ENCODE measurements at regions of chr20 and their contacts with region 1.

Region 1: DNA sequence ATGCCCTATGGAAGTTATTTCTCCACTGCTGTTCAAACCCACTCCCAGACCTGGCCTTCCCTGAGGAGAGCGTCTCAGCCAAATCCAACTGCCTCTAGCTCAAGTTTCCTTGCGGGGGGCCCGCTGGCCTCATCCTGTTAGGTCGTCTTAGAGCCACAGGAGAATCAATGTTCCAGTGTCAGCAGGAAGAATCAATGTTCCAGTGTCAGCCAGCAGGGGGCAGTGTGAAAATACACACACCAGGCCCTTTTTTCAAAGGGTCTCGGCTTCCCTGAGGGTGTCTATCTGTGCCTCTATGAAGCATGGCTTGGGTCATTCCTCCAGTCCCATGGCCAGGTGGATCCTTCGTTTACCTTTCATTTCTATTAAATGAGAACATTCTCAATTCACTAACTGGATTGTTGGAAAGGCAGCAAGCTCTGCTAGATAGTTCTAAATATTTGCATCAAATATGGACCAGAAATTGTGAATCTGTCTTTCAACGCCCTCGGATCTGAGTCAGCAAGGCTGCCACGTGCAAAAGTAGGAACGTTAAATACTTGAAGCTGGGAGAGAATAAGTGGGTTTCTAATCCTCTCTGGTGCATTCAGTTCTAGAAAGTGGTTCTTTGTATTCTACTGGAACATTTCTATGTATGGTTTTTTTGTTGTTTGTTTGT is 19.2 kb downstream of the PRND start:
- DNase-seq: peak; percentile 87
- ATAC-seq: peak; percentile 87
- H3K4me3 Mint-ChIP-seq: no peak overlapping the region
- H3K27ac Mint-ChIP-seq: no peak overlapping the region
- H3K4me1 Mint-ChIP-seq: peaks cover 3% of the 10 kb centered on the region; the same call in 1 of the 2 replicates
- H3K27me3 Mint-ChIP-seq: peaks cover 2% of the 10 kb centered on the region; the same call in 1 of the 2 replicates
- CTCF ChIP-seq: peak; percentile 85

Region 2: DNA sequence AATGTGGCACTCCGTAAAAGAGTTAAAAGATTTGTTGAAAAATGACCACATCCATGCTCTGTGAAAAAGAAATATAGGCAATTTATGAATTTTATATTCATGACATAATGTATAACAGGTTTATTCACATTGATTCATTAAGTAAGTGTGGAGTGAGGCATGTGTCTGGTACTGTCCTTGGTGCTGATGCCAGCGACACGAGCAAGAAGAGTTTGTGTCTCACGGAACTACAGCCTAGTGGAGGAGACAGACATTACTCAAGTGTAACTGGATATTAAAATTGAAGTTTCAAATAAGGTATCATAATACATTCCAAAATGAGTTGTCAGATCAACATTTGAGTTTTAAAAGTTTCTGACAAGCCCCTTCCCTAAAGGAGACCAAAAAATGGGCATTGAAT is 177.4 kb before region 1 on chr20:
- CTCF ChIA-PET with region 1: no interaction called
- POLR2A ChIA-PET with region 1: no interaction called
- DNase-seq: peak; percentile 47
- ATAC-seq: peak; percentile 60; the same call in 1 of the 2 replicates
- H3K4me3 Mint-ChIP-seq: no peak overlapping the region
- H3K27ac Mint-ChIP-seq: no peak overlapping the region
- H3K4me1 Mint-ChIP-seq: peaks cover 6% of the 10 kb centered on the region
- H3K27me3 Mint-ChIP-seq: peaks cover 14% of the 10 kb centered on the region
- CTCF ChIP-seq: no peak

Region 3: DNA sequence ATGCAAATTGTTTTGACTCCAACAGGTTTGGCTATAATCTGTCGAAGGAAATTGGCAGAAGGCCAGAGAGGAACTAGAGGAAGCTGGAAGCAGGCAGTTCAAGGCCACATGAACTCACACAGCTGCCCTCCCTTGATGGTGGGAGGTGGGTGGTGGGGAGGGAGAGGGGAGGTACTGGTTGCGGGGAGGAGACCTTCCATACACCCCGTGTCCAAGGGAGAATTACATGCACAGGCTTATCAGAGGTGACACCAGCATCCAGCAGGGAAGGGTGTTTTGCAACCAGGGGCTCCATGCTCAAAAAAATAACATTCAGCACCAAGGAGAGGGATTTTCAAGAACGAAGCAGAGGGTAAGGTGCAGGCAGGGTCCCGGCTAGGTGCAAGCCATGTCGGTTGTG is 10.1 kb before region 1 on chr20:
- CTCF ChIA-PET with region 1: interaction called, 11 read pairs
- POLR2A ChIA-PET with region 1: no interaction called
- DNase-seq: no peak
- ATAC-seq: no peak; the same call in none of the 2 replicates
- H3K4me3 Mint-ChIP-seq: no peak overlapping the region
- H3K27ac Mint-ChIP-seq: no peak overlapping the region
- H3K4me1 Mint-ChIP-seq: peaks cover 32% of the 10 kb centered on the region
- H3K27me3 Mint-ChIP-seq: no peaks in the 10 kb centered on the region
- CTCF ChIP-seq: no peak

Region 4: DNA sequence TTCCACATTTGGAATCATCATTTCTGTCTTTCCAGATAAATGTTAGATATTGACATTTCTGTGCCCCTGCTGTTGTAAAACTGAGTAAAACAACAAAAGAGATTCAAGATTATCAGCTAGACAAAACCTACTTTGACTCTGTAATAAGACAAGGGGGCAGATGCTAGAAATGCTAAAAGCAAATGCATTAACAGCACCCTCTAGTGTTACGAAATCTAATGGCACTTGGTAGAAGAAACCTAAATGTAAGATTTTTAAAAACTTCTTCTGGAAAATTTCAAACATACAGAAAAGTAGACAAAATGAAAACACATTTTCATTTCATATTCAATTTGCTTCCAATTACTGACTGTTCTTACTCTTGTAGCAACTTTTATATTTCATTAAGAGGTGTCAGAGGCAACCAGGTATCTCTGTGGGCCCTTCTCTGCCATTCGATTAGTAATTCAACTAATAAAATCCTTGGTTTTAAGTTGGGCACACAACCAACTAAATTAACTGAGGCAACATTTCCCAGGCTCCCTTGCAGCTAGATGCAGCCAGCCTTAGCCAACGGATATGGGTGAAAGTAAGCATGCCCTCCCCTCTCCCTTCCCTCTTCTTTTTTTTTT is 215.4 kb after region 1 on chr20:
- CTCF ChIA-PET with region 1: interaction called, 10 read pairs
- POLR2A ChIA-PET with region 1: no interaction called
- DNase-seq: no peak
- ATAC-seq: no peak; the same call in 1 of the 2 replicates
- H3K4me3 Mint-ChIP-seq: no peak overlapping the region
- H3K27ac Mint-ChIP-seq: no peak overlapping the region
- H3K4me1 Mint-ChIP-seq: no peaks in the 10 kb centered on the region
- H3K27me3 Mint-ChIP-seq: no peaks in the 10 kb centered on the region
- CTCF ChIP-seq: peak; percentile 59